ENCODE measurements at regions of chr14 and their contacts with region 1.

Region 1: GRCh38 chr14:103679351-103679750 is 35.9 kb downstream of the XRCC3 start:
- DNase-seq: peak in 7 of 9 donors; percentile 11 to 52 (median 38)
- ATAC-seq: peak; percentile 92
- H3K4me3 ChIP-seq: no peak overlapping the region
- H3K4me3 Mint-ChIP-seq: no peak overlapping the region
- H3K27ac ChIP-seq: no peak overlapping the region
- H3K27ac Mint-ChIP-seq: peak overlapping the region in 4 of 9 donors; percentile 42 to 68 (median 56)
- H3K4me1 ChIP-seq: no peaks in the 10 kb centered on the region
- H3K4me1 Mint-ChIP-seq: peaks cover 0 to 6% (median 3%) of the 10 kb centered on the region in 7 donors
- H3K27me3 ChIP-seq: no peaks in the 10 kb centered on the region
- H3K27me3 Mint-ChIP-seq: no peaks in the 10 kb centered on the region

Region 2: DNA sequence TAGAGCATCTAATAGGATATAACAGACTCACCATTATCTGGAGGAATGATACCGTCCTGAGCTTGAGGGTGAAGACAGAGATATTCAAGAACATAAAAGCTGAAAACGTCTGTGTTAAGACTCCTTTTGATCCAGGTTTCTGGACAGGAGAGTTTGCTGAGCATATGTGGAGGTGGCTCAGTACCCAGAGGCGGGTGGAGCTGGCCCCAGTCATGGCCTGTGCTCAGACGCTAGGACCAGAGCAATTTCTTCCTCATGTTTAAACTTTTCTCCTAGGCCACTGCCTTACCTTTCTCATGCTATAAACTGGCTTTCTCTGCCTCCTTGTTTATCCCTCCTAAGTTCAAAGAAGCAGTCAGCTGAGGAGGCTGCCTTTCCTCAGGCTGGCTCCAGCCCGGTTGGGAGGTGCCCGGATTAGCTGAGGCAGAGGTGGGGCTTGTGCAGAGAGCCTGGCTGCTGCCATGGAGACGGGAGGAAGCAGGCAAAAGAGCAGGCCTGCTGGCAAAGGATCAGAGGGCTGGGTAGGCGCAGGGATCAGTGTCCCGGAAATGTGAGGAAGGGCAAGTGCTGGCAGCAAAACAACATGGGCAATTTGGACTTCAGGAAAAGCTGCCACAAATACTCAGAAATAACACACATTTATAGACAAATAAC is 102.9 kb before region 1 on chr14:
- CTCF ChIA-PET with region 1: no interaction called
- POLR2A ChIA-PET with region 1: no interaction called
- intact Hi-C with region 1: loop called (anchors 1 kb)
- DNase-seq: no peak
- ATAC-seq: no peak
- H3K4me3 ChIP-seq: no peak overlapping the region
- H3K4me3 Mint-ChIP-seq: no peak overlapping the region
- H3K27ac ChIP-seq: no peak overlapping the region
- H3K27ac Mint-ChIP-seq: no peak overlapping the region
- H3K4me1 ChIP-seq: no peaks in the 10 kb centered on the region
- H3K4me1 Mint-ChIP-seq: peaks cover 0 to 2% (median 0%) of the 10 kb centered on the region in 7 donors
- H3K27me3 ChIP-seq: no peaks in the 10 kb centered on the region
- H3K27me3 Mint-ChIP-seq: no peaks in the 10 kb centered on the region

Region 3: DNA sequence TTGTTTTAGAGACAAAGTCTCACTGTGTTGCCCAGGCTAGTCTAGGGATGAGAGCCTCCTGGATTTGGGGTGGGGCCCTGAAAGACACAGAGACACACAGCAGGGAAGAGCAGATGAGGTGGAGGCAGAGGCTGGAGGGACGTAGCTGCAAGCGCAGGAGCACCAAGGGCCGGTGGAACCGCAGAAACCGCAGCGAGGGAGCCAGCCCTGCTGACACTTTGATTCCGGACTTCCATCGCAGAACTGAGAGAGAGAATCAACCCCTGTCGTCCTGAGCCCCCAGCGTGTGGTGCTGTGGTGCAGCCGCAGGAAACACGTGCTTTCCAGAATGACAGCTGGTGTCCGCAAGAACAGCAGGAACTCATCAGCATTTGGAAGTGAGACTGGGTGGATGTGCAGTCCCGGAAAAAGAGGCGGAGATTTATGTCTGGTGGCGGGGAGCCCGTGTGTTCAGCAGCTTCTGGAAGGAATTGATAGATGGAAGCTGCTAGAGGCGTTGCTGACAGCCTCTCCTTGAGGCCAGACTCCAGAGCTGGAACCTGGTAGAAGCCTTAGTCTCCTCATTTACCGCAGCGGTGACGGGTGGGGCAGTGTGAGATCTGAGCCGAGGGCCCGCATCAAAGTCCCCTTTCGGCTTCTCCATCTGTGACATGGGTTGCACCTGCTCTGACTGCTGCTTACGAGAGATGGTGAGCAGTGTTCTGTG is 72.2 kb before region 1 on chr14:
- CTCF ChIA-PET with region 1: interaction called, 3 read pairs
- POLR2A ChIA-PET with region 1: no interaction called
- intact Hi-C with region 1: loop called in 1 of 2 experiments (anchors 1 kb)
- DNase-seq: peak; percentile 15 to 63 (median 46)
- ATAC-seq: peak; percentile 84
- H3K4me3 ChIP-seq: peak overlapping the region; percentile 49
- H3K4me3 Mint-ChIP-seq: peak overlapping the region; percentile 76 to 93 (median 84)
- H3K27ac ChIP-seq: no peak overlapping the region
- H3K27ac Mint-ChIP-seq: peak overlapping the region; percentile 19 to 86 (median 52)
- H3K4me1 ChIP-seq: peaks cover 18 to 21% of the 10 kb centered on the region in 2 donors
- H3K4me1 Mint-ChIP-seq: peaks cover 14 to 28% (median 21%) of the 10 kb centered on the region in 7 donors
- H3K27me3 ChIP-seq: no peaks in the 10 kb centered on the region
- H3K27me3 Mint-ChIP-seq: peaks cover 0 to 28% (median 0%) of the 10 kb centered on the region in 5 donors